Colonic mucosa (tissue), 4 donors: ENCODE measurements at regions of chr12 and their contacts with region 1.

Region 1: DNA sequence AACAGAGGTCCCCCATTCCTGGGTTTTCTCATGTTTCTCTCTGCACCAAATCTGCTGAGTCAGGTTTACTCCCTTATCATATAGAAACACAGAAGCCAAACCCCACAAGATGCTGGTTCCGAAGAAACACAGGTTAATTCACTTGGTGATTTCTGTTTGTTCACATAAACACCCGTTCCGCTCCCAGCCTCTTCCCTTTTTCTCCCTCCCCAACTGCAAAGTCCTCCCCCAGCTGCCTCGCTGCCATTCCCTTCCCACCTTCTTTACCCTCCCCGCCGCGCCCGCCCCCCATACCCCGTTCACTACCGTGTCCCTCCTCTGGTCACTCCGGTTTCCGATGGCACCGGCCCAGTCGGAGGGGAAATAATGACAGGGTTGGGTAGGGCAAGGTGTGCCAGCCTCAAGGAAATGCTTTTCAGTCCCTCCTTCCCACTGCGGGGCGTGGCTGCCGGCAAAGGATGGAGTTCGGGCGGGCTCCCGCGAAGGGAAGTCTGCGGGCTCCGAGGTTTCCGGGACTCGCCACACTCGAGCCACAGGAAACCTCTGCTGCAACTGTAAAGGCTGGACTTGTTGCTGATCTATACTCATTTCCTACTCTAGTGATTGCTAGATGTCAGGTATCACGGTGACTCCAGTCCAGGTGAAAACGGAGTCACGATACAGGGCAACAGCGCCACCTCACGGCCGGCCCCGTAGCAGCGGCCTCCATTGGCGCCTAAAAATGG is at the start of gene STYK1:
- DNase-seq: peak; percentile 90
- H3K4me3 ChIP-seq: peak within 1 kb of the TSS; percentile 41
- H3K27ac ChIP-seq: peak within 1 kb of the TSS; percentile 86
- H3K4me1 ChIP-seq: no peaks in the 10 kb centered on the region
- H3K27me3 ChIP-seq: no peaks in the 10 kb centered on the region
- CTCF ChIP-seq: peak; percentile 88
- total RNA-seq, gene STYK1: 24.5 to 53.3 TPM

Region 2: DNA sequence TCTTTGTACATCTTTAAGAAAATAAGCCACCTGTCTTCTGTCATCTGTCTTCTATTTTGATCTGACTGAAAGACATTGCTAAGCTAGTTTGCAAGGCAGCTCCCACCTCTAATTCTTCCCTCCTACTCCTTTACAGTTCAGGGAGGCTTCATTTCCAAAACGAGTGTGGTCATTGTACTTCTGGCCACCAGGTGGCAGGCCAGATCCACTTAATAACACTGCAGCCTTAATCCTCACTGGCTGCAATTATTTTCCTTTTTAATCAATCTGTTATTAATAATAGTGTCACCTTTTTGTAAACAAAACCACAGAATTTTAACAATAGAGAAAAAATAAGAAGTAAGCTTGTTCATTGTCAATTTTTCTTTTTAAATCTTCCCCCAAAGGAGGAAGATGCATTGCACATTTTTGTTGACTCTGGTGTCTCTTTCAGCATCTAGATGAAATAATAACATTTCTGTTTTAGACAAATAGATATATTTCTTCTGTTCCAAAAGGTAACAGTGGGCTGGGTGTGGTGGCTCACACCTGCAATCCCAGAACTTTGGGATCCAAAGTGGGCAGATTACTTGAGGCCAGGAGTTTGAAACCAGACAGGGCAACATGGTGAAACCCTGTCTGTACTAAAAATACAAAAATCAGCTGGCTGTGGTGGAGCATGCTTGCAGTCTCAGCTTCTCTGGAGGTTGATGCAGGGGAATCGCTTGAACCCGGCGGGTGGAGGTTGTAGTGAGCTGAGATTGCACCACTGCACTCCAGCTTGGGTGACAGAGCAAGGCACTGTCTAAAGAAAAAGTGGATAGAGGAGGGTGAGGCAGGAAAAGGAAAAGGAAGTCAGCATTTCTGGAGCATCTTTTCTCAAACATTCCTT is 437.8 kb before region 1 on chr12:
- intact Hi-C with region 1: loop called (anchors 10 kb)
- DNase-seq: no peak
- H3K4me3 ChIP-seq: no peak overlapping the region
- H3K27ac ChIP-seq: no peak overlapping the region
- H3K4me1 ChIP-seq: no peaks in the 10 kb centered on the region
- H3K27me3 ChIP-seq: no peaks in the 10 kb centered on the region
- CTCF ChIP-seq: peak; percentile 86

Region 3: DNA sequence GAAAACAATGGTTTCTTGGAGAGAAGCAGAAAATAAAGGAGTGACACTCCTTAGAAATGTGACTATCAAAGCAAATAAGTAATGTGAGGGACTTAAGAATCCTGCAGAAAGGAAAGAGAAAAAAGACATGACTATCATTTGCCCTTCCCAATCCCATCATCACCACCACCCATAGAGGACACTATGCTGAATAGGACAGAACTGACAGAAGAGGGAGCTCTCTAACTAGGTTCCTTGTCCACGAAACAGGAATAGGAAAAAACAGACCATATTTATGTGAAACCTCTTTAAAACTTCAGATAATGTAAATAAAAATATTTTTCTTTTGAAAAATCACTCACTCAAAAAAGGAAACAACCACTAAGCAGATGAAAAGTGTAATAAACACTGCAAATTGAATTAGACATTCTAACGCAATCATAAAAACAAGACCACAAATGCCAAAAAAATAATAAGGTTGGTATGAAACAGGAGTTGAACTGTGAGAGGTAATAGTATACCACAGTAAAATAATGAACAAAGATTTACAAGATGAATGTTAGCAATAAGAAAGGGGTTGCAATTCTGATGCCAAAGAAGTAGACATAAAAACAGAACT is 342.1 kb before region 1 on chr12:
- intact Hi-C with region 1: loop called (anchors 10 kb)
- DNase-seq: no peak
- H3K4me3 ChIP-seq: no peak overlapping the region
- H3K27ac ChIP-seq: no peak overlapping the region
- H3K4me1 ChIP-seq: no peaks in the 10 kb centered on the region
- H3K27me3 ChIP-seq: no peaks in the 10 kb centered on the region
- CTCF ChIP-seq: peak; percentile 38

Region 4: DNA sequence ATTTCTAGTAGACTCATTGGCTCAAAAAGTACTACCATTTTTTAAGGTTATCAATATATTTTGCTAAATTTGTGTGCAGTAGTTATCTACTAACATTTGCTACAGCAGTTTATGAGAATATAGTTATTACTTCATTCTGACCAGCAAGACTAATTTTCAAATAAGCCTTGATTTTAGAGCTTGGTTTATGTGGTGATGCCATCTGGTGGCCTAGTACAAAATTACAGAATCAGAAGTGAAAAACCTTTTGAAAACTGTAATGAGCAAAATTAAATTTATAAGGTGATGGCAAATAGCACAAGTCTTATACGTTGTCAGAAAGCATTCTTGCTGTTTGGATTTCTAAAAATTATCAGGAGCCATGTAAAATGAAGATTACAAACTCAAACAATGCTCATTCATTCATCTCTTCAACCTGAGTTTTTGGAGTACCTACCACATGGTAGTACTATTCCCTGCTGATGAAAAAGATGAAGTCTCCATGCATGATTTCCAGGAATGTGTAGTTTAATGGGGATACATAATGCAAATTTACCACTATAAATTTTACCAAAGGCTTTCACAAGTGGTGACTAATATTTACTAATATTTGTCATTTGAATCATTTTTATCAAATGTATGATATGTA is 111.4 kb before region 1 on chr12:
- intact Hi-C with region 1: loop called (anchors 5 kb)
- DNase-seq: peak; percentile 40
- H3K4me3 ChIP-seq: no peak overlapping the region
- H3K27ac ChIP-seq: no peak overlapping the region
- H3K4me1 ChIP-seq: no peaks in the 10 kb centered on the region
- H3K27me3 ChIP-seq: no peaks in the 10 kb centered on the region
- CTCF ChIP-seq: peak; percentile 58

Region 5: DNA sequence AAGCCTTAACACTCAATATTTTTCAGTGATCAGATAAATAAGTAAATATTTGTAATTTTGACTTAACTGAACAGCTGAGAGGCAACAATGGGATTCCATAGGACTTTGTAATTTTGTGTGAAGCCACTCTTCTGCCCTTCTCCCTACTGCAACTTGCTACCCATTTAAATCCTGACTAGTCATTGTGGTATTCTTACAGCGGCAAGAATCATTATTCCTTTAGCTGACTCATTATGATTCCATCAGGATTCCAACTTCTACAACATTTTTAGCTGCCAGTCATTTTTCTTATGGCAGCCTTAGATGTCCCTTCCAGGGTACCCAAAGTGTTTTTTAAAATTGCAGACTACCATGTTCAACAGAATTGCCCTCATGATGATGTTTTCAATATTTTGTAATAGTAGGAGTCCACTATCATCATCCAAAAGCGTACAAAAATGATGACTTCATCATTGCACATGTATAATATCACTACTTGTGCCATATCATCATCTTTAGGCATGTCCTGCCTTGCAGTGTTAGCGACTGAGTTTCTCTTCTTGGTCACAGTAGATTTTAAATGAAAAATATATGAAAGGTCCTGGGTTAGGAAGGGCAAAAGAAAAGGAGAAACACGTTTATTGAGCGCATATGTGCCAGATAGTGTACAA is 55.4 kb before region 1 on chr12:
- intact Hi-C with region 1: loop called (anchors 5 kb)
- DNase-seq: no peak
- H3K4me3 ChIP-seq: no peak overlapping the region
- H3K27ac ChIP-seq: no peak overlapping the region
- H3K4me1 ChIP-seq: no peaks in the 10 kb centered on the region
- H3K27me3 ChIP-seq: no peaks in the 10 kb centered on the region
- CTCF ChIP-seq: no peak